Esophagus squamous epithelium (tissue), 5 donors: ENCODE measurements at regions of chr17 and their contacts with region 1.

Region 1: DNA sequence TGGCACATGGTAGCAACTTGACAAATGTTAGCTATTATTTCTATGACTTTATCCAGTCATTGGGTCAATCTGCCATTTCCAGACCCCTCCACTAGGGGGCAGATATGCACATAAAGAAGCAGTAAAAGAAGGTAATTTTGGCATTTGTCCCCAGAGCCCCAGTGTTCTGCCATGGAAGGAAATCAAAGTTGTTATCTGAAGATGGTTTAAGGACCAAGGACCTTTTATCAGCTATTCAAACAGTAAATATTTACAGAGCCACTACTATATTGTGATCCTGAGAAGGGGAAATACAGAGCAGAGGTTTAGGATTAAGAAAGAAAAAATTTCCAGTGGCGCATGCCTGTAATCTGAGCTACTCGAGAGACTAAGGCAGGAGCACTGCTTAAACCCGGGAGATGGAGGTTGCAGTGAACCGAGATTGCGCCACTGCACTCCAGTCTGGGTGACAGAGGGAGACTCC is 20.0 kb downstream of the TRAF4 start:
- DNase-seq: no peak
- H3K4me3 ChIP-seq: no peak overlapping the region
- H3K27ac ChIP-seq: no peak overlapping the region
- H3K4me1 ChIP-seq: peaks cover 5 to 25% (median 7%) of the 10 kb centered on the region in 3 donors
- H3K27me3 ChIP-seq: no peaks in the 10 kb centered on the region
- CTCF ChIP-seq: peak; percentile 76 to 95 (median 88)
- POLR2A ChIP-seq: no peak

Region 2: DNA sequence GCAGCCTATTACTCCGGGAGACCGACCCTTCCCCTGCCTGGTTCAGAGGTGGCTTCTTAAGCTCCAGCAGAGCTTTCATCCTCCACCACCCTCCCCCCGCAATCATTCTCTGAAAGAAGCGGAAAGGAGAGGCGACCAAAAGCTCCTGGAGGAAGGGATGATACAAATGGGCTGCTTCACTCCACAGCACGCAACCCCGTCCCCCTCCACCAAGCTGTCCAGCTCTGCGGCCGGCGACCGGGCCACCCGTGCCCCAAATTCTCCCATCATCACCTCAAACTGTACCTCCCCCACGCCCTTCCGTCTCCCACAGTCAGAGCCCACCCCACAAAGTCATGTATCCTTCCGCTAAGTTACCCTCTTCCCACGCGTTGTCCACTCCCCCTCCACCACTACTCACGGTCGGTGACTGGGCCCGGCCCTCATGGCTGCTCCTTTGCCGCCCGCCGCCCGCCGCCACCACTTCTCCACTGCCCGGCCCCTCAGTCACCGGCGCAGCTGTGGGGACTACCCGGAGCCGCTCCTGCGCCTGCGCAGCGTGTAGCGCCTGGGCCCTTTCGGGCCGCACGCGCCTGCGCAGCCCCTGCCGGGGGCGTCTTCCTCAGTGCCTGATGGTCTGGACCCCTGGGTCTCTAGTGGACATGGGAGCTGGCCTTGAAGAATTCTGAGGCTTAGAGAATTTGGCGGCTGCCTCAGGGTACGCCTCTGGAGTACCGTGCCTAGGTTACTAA is 78.6 kb after region 1 on chr17 and contains the start of gene FAM222B:
- intact Hi-C with region 1: loop called (anchors 10 kb)
- DNase-seq: no peak
- H3K4me3 ChIP-seq: peak within 1 kb of the TSS; percentile 71 to 85 (median 78)
- H3K27ac ChIP-seq: peak within 1 kb of the TSS; percentile 73 to 88 (median 80)
- H3K4me1 ChIP-seq: peaks cover 5 to 31% (median 6%) of the 10 kb centered on the region in 3 donors
- H3K27me3 ChIP-seq: no peaks in the 10 kb centered on the region
- CTCF ChIP-seq: peak in 2 of 6 experiments; percentile 27 to 46
- POLR2A ChIP-seq: peak in 2 of 4 donors; percentile 56 to 75
- total RNA-seq, gene FAM222B: 8.0 to 16.4 (median 11.2) TPM

Region 3: GRCh38 chr17:28916302-28916934 is 152.6 kb after region 1 on chr17:
- intact Hi-C with region 1: loop called (anchors 10 kb)
- DNase-seq: no peak
- H3K4me3 ChIP-seq: no peak overlapping the region
- H3K27ac ChIP-seq: no peak overlapping the region
- H3K4me1 ChIP-seq: peaks cover 0 to 14% (median 0%) of the 10 kb centered on the region in 3 donors
- H3K27me3 ChIP-seq: no peaks in the 10 kb centered on the region
- CTCF ChIP-seq: peak; percentile 46 to 80 (median 68)
- POLR2A ChIP-seq: no peak